ENCODE measurements at regions of chr15 and their contacts with region 1.

Region 1: GRCh38 chr15:57541805-57542504 is 49.7 kb upstream of the MYZAP start:
- DNase-seq: peak; percentile 52
- H3K4me3 ChIP-seq: no peak overlapping the region
- H3K27ac ChIP-seq: no peak overlapping the region
- H3K27me3 ChIP-seq: peaks cover 15% of the 10 kb centered on the region
- CTCF ChIP-seq: peak; percentile 95

Region 2: GRCh38 chr15:56496635-56497034 is 1045.3 kb before region 1 on chr15:
- CTCF ChIA-PET with region 1: interaction called, 12 read pairs
- POLR2A ChIA-PET with region 1: no interaction called
- DNase-seq: peak; percentile 55
- H3K4me3 ChIP-seq: no peak overlapping the region
- H3K27ac ChIP-seq: no peak overlapping the region
- H3K27me3 ChIP-seq: peaks cover 9% of the 10 kb centered on the region
- CTCF ChIP-seq: peak; percentile 72

Region 3: DNA sequence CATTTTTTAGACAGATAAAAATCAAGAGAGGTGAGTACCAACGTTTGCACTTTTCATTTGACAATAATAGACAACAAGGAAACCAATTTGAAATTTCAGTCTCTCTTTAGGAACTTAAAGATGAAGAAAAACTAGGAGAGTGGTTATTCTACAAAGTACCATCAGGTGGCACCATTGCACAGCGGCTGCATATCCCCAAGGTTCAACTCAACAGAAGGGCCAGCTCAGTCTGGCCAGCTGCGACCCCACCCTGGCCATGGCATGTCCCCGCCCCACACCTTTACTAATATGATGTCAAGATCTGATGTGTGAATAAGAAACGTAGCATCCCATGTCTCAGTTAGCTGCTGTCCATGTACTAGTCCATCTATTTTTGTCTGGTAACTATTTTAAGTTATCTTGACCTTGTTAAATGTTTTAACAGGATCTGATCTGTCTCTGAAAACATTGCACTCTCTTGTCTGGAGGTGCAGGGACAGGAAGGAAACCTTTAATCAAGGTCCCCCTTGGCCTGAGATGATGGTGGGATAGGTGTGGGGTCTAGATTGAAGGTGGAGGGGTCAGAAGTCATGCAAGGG is 201.2 kb before region 1 on chr15:
- CTCF ChIA-PET with region 1: interaction called, 184 read pairs
- POLR2A ChIA-PET with region 1: no interaction called
- DNase-seq: no peak
- H3K4me3 ChIP-seq: no peak overlapping the region
- H3K27ac ChIP-seq: no peak overlapping the region
- H3K27me3 ChIP-seq: no peaks in the 10 kb centered on the region
- CTCF ChIP-seq: peak; percentile 84

Region 4: GRCh38 chr15:57527382-57528091 is 14.4 kb before region 1 on chr15:
- CTCF ChIA-PET with region 1: interaction called, 63 read pairs
- POLR2A ChIA-PET with region 1: no interaction called
- DNase-seq: peak; percentile 78
- H3K4me3 ChIP-seq: no peak overlapping the region
- H3K27ac ChIP-seq: no peak overlapping the region
- H3K27me3 ChIP-seq: peaks cover 9% of the 10 kb centered on the region
- CTCF ChIP-seq: peak; percentile 65

Region 5: DNA sequence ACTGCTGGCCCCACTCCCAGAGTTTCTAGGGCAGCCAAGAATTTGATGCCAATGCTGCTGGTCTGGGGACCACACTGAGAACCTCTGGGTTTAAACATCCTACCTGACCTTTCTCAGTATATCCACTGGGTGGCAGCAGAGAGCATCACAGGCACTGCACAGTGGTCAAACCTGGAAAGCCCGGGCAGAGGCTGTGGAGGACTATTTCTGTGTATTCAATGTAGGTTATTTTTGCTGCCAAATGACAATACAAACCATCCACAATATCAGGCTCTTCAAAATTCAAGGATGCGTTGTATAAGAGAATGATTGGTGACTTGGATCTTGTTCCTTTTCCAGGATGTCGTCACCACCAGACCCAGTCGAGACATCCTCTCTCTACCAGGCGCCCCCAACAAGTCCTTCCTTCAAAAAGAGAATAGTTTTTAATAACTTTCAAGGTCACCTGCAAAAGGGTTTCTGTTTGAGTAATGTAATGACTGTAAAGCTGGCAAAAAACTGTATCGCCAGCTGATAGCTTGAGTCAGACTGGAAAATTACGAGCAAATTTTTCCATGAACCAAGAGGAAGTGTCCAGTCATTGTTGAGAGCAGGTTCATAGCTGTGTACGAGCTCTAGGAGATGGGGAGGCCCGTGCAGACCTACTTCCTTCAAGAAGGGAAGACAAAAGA is 19.2 kb after region 1 on chr15:
- CTCF ChIA-PET with region 1: interaction called, 47 read pairs
- POLR2A ChIA-PET with region 1: no interaction called
- DNase-seq: peak; percentile 26
- H3K4me3 ChIP-seq: no peak overlapping the region
- H3K27ac ChIP-seq: no peak overlapping the region
- H3K27me3 ChIP-seq: peaks cover 12% of the 10 kb centered on the region
- CTCF ChIP-seq: peak; percentile 94

Measured in AG04450 (cell line).